ENCODE measurements at regions of chr15 and their contacts with region 1.

Region 1: GRCh38 chr15:92803847-92804609 is 96.1 kb upstream of the CHD2 start:
- DNase-seq: peak; percentile 59
- H3K4me3 Mint-ChIP-seq: peak overlapping the region; percentile 29
- H3K27ac Mint-ChIP-seq: peak overlapping the region; percentile 84
- H3K4me1 Mint-ChIP-seq: peaks cover 45% of the 10 kb centered on the region
- H3K27me3 Mint-ChIP-seq: no peaks in the 10 kb centered on the region

Region 2: DNA sequence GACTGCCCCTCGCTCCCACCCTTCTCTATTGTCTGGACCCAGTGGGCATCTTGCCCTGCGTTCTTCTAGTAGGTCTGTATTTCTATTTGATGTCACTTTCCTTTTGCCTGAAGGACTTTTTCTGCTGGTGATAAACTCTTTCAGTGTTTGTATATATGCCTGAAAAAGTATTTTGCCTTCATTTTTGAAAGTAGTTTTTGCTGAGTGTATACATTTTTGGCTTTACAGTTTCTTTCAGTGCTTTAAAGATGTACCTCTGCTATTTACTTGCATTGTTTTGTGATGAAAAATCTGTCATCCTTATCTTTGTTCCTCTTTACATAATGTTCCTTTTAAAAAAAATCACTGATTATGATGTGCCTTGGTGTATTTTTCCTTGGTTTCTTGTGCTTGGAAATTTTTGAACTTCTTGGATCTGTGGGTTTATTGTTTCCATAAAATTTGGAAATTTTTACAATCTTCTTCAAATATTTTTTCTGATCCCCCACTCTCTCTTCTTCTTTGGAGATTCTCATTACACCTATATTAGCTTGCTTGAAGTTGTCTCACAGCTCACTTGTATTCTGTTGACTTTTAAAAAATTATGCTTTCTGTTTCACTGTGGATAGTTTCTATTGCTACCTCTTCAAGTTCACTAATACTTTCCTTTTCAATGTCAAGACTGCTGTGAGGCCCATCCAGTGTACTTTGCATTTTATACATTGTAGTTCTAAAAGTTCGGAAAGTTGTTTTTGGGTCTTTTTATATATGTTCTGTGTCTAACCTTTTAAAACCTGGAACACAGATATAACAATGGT is 217.1 kb after region 1 on chr15:
- intact Hi-C with region 1: loop called (anchors 2 kb)
- DNase-seq: no peak
- H3K4me3 Mint-ChIP-seq: peak overlapping the region; percentile 34
- H3K27ac Mint-ChIP-seq: peak overlapping the region; percentile 79
- H3K4me1 Mint-ChIP-seq: peaks cover 91% of the 10 kb centered on the region
- H3K27me3 Mint-ChIP-seq: no peaks in the 10 kb centered on the region

Measured in activated T-helper 1 cell treated with anti-CD3 and anti-CD28 coated beads, Interleukin-12 subunit alpha, Interleukin-12 subunit beta, Interleukin-2, Interleukin-4 antibody, amounts not matched to agents 30 ng/mL and 10 ng/mL and 1 ng/mL, durations not matched to agents 14 hours and 24 hours and 36 hours (primary cell).